Naive thymus-derived CD4-positive, alpha-beta T cell (primary cell): ENCODE measurements at regions of chr16 and their contacts with region 1.

Region 1: GRCh38 chr16:58563235-58563634 is 47.9 kb downstream of the SETD6 start:
- DNase-seq: no peak
- ATAC-seq: no peak
- H3K4me3 ChIP-seq: no peak overlapping the region
- H3K4me3 Mint-ChIP-seq: no peak overlapping the region
- H3K27ac ChIP-seq: no peak overlapping the region
- H3K27ac Mint-ChIP-seq: peak overlapping the region in 1 of 9 donors; percentile 7
- H3K4me1 ChIP-seq: no peaks in the 10 kb centered on the region
- H3K4me1 Mint-ChIP-seq: peaks cover 4 to 13% (median 7%) of the 10 kb centered on the region in 7 donors
- H3K27me3 ChIP-seq: no peaks in the 10 kb centered on the region
- H3K27me3 Mint-ChIP-seq: no peaks in the 10 kb centered on the region

Region 2: GRCh38 chr16:58129097-58129936 is 433.9 kb before region 1 on chr16 and contains the start of gene CFAP20:
- CTCF ChIA-PET with region 1: no interaction called
- POLR2A ChIA-PET with region 1: no interaction called
- intact Hi-C with region 1: no loop called
- DNase-seq: peak; percentile 87 to 99 (median 97)
- ATAC-seq: peak; percentile 94
- H3K4me3 ChIP-seq: peak within 1 kb of the TSS; percentile 99
- H3K4me3 Mint-ChIP-seq: peak within 1 kb of the TSS; percentile 89 to 96 (median 92)
- H3K27ac ChIP-seq: peak within 1 kb of the TSS; percentile 90
- H3K27ac Mint-ChIP-seq: peak within 1 kb of the TSS; percentile 80 to 98 (median 94)
- H3K4me1 ChIP-seq: peaks cover 17 to 29% of the 10 kb centered on the region in 2 donors
- H3K4me1 Mint-ChIP-seq: peaks cover 30 to 47% (median 45%) of the 10 kb centered on the region in 7 donors
- H3K27me3 ChIP-seq: no peaks in the 10 kb centered on the region
- H3K27me3 Mint-ChIP-seq: no peaks in the 10 kb centered on the region
- total RNA-seq, gene CFAP20: 28.2 to 165 (median 40.7) TPM

Region 3: GRCh38 chr16:58487566-58488351 is 75.5 kb before region 1 on chr16:
- CTCF ChIA-PET with region 1: no interaction called
- POLR2A ChIA-PET with region 1: no interaction called
- intact Hi-C with region 1: no loop called
- DNase-seq: peak; percentile 44 to 76 (median 65)
- ATAC-seq: peak; percentile 88
- H3K4me3 ChIP-seq: no peak overlapping the region
- H3K4me3 Mint-ChIP-seq: peak overlapping the region in 4 of 10 donors; percentile 16 to 42 (median 32)
- H3K27ac ChIP-seq: no peak overlapping the region
- H3K27ac Mint-ChIP-seq: no peak overlapping the region
- H3K4me1 ChIP-seq: no peaks in the 10 kb centered on the region
- H3K4me1 Mint-ChIP-seq: peaks cover 0 to 3% (median 0%) of the 10 kb centered on the region in 7 donors
- H3K27me3 ChIP-seq: no peaks in the 10 kb centered on the region
- H3K27me3 Mint-ChIP-seq: peaks cover 0 to 15% (median 9%) of the 10 kb centered on the region in 5 donors

Region 4: DNA sequence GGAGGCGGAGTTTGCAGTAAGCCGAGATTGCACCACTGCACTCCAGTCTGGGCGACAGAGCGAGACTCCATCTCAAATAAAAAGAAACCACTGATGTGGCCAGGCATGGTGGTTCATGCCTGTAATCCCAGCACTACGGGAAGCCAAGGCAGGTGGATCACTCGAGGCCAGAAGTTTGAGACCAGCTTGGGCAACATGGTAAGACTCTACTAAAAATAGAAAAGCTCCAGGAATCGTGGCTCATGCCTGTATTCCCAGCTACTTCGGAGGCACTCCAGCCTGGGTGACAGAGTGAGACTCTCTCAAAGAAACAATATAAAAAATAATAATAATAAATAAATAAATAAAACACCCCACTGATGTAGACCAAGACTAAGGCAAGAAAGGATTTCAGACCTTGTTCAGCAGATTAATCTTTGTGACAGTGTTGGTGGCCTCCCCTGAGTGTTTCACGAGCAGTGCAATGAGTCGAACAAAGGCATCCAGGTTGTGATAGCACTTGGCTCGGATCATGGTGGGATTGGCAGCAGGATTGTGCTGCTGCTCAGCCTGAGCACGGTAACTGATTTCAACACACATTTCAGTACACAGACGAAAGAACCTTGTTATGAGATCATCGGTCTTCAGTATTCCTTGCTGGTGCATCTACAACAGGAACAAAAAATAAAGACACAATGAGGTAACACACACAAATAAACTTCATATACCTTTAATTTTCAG is 29.3 kb before region 1 on chr16:
- CTCF ChIA-PET with region 1: no interaction called
- POLR2A ChIA-PET with region 1: no interaction called
- intact Hi-C with region 1: loop called in 1 of 2 experiments (anchors 2 kb)
- DNase-seq: no peak
- ATAC-seq: no peak
- H3K4me3 ChIP-seq: no peak overlapping the region
- H3K4me3 Mint-ChIP-seq: no peak overlapping the region
- H3K27ac ChIP-seq: no peak overlapping the region
- H3K27ac Mint-ChIP-seq: peak overlapping the region in 1 of 9 donors; percentile 65
- H3K4me1 ChIP-seq: no peaks in the 10 kb centered on the region
- H3K4me1 Mint-ChIP-seq: peaks cover 0 to 5% (median 0%) of the 10 kb centered on the region in 7 donors
- H3K27me3 ChIP-seq: no peaks in the 10 kb centered on the region
- H3K27me3 Mint-ChIP-seq: no peaks in the 10 kb centered on the region